A673 (cell line): ENCODE measurements at regions of chr10 and their contacts with region 1.

Region 1: GRCh38 chr10:123559066-123559822 is 106.9 kb upstream of the GPR26 start:
- DNase-seq: peak; percentile 71
- H3K4me3 ChIP-seq: no peak overlapping the region
- H3K27ac ChIP-seq: no peak overlapping the region
- H3K4me1 ChIP-seq: no peaks in the 10 kb centered on the region
- H3K27me3 ChIP-seq: peaks cover 18% of the 10 kb centered on the region
- CTCF ChIP-seq: peak; percentile 96

Region 2: GRCh38 chr10:122648599-122649428 is 910.4 kb before region 1 on chr10:
- CTCF ChIA-PET with region 1: no interaction called
- POLR2A ChIA-PET with region 1: no interaction called
- intact Hi-C with region 1: loop called (anchors 5 kb)
- DNase-seq: peak; percentile 54
- H3K4me3 ChIP-seq: no peak overlapping the region
- H3K27ac ChIP-seq: no peak overlapping the region
- H3K4me1 ChIP-seq: no peaks in the 10 kb centered on the region
- H3K27me3 ChIP-seq: peaks cover 43% of the 10 kb centered on the region
- CTCF ChIP-seq: peak; percentile 84

Region 3: DNA sequence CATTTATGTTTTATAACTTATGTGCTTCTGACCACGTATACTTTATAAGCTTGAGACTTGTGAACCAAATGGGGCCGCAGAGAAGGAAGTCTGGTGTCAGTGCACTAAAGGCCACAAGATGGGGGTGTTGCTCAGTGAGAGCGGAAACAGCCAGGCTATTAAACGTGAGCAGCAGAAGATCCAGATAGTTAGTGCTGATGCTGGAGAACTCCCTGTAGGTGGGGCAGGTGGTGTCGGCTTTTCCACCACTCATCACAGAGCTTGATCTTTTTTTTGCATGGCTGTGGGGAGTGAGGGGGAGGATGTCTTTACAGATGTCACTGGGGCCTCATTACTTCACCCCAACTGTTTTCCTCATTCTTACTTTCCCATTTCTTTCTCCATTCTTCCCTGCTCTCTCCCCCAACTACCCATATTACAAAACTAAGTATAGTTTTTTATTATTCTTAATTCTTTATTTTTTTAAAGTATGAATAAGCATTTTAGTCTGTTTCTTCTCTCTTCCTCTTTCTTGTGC is 515.8 kb before region 1 on chr10:
- CTCF ChIA-PET with region 1: interaction called, 6 read pairs
- POLR2A ChIA-PET with region 1: no interaction called
- intact Hi-C with region 1: loop called (anchors 1 kb)
- DNase-seq: peak; percentile 65
- H3K4me3 ChIP-seq: no peak overlapping the region
- H3K27ac ChIP-seq: no peak overlapping the region
- H3K4me1 ChIP-seq: no peaks in the 10 kb centered on the region
- H3K27me3 ChIP-seq: no peaks in the 10 kb centered on the region
- CTCF ChIP-seq: peak; percentile 79

Region 4: DNA sequence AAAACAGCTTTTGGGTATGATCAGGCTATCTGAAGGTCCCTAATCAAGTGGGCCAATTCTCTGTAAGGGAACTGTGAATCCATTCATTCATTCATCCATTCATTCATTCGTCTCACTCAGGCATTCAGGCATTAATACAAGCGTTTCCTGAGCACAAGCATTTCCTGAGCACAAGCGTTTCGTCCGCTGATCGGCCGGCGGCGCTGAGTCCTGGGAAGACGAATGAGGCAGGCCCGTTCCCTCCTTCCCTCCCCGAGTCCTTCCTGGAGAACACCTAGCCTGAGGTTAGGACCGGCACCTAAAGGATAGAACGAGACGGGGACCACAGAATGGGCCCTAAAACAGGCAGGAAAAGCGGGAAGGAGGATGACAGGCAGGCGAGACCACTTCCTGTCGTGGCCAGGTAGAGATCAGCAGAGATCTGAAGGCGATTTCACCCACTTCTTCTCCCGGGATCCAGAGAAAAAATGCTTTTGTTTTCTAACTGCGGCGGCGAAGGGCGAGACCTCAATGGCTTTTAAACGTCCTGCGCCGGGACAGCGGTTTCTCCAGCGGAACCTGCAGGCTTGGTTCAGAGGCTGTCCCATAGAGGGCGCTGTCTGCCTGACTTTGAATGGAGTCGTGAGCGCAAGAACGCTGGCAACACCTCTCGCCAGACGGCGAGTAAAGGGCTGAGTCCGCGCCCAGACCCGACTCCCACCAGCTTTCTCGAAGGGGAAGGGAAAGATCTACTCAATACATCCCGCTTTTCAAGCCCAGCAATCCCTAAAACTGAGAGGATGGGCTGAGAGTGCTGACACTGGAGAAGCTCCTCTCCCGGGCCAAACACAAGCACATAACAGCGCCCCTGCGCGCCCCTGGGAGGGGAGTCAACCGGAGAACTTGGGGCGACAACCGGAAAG is 426.4 kb before region 1 on chr10:
- CTCF ChIA-PET with region 1: no interaction called
- POLR2A ChIA-PET with region 1: no interaction called
- intact Hi-C with region 1: loop called (anchors 1 kb)
- DNase-seq: peak; percentile 89
- H3K4me3 ChIP-seq: no peak overlapping the region
- H3K27ac ChIP-seq: no peak overlapping the region
- H3K4me1 ChIP-seq: peaks cover 29% of the 10 kb centered on the region
- H3K27me3 ChIP-seq: peaks cover 99% of the 10 kb centered on the region
- CTCF ChIP-seq: peak; percentile 95

Region 5: GRCh38 chr10:123530166-123530870 is 28.9 kb before region 1 on chr10:
- CTCF ChIA-PET with region 1: no interaction called
- POLR2A ChIA-PET with region 1: no interaction called
- intact Hi-C with region 1: no loop called
- DNase-seq: no peak
- H3K4me3 ChIP-seq: no peak overlapping the region
- H3K27ac ChIP-seq: no peak overlapping the region
- H3K4me1 ChIP-seq: no peaks in the 10 kb centered on the region
- H3K27me3 ChIP-seq: peaks cover 28% of the 10 kb centered on the region
- CTCF ChIP-seq: no peak